ENCODE measurements at regions of chr17 and their contacts with region 1.

Region 1: DNA sequence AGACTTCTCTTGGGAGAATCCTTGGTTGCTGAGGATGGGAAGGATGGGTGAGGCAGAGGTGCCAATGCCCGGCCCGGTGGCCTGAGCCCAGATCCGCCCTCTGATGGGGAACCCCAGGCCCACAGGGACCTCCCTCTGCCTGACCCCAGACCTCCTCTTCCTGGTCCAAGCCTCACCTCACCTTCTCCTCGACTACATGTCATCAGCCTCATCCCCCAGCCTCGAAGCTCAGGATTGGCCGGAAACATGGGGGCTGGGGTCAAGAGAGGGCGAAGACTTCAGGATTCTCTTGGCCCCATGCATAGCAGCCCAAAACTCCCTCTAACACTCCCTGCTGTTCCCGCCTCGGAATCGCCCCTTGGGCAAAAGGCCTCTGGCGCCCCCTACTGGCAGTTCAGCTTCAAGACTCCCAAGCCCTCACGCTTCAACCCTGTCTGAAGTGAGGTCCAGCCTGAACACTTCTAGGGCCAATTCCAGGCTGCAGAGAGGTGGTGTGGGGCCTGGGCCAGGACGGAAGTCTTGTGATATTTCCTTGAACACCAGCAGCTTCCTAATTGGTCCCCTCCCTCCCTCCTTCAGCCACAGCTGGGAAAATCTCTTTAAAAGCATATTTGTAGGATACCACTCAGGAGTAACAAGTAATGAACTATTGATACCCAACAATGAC is 47.2 kb downstream of the ARHGAP27 start:
- DNase-seq: peak; percentile 85 to 98
- H3K4me3 ChIP-seq: no peak overlapping the region
- CTCF ChIP-seq: peak in 2 of 3 donors; percentile 58 to 88
- POLR2A ChIP-seq: no peak

Region 2: DNA sequence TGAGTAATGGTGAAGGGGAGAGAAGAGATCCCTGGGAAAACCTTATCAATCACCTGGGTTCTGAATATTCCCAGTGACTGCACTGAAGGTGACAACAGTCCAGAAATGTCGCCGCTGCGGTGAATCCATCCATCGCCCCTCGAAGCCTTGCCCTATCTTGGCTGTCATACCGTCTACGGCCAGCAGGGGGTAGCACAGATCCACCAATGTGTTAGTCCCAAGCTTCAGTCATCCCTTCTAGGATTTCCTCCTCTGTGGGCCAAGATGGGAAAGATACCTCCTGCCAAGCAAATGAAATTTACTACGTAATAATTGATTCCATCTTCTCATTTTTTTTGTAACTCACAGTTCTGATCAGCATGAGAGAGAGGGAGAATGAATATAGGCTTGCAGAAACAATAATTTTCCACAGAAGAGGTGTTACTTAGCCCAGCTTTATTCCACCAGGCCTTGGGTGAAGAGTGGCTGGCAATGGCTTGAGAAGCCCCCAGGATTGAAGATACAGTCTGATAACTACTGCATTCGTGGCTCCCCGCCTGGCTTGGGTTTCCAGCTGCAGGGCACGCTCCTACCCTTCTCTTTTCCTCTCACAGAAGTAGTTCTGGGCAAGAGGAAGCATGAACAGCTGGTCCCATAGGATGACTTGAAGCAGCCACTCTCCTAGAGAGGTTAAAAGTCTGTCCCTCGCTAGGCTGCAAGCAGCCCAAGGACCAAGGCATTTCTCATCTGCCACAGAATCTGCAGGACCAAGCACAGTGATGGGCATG is 166.4 kb before region 1 on chr17:
- intact Hi-C with region 1: loop called (anchors 5 kb)
- DNase-seq: peak; percentile 89 to 98
- H3K4me3 ChIP-seq: no peak overlapping the region
- CTCF ChIP-seq: peak in 1 of 3 donors; percentile 98
- POLR2A ChIP-seq: no peak

Region 3: GRCh38 chr17:45277216-45277849 is 108.1 kb before region 1 on chr17:
- intact Hi-C with region 1: loop called (anchors 5 kb)
- DNase-seq: peak; percentile 89 to 98
- H3K4me3 ChIP-seq: no peak overlapping the region
- CTCF ChIP-seq: peak in 1 of 3 donors; percentile 82
- POLR2A ChIP-seq: no peak

Region 4: DNA sequence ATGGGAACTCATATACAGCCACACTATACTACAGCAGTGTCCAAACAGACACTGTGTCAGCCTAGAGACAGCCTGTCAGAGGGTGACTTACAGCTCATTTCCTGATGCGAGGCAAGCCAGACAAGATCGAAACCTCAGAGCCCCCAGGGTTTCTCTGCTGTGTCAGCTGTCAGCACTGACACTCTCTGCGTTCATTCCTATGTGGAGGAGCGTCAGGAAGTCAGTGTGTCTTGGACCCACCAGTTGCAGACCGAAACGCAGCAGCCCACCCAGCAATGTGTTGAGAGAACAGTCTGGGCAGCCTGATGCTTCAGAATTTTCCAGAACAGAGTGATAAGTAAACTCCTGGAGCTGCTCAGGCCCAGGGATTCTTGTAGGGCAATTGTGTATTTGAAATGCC is 488.3 kb after region 1 on chr17:
- intact Hi-C with region 1: no loop called
- DNase-seq: no peak
- H3K4me3 ChIP-seq: no peak overlapping the region
- CTCF ChIP-seq: no peak
- POLR2A ChIP-seq: no peak

Measured in lower leg skin (tissue), 4 donors.